Activated B cell treated with CpG ODN at 0.5 μM for 24 hours (primary cell): ENCODE measurements at regions of chr7 and their contacts with region 1.

Region 1: DNA sequence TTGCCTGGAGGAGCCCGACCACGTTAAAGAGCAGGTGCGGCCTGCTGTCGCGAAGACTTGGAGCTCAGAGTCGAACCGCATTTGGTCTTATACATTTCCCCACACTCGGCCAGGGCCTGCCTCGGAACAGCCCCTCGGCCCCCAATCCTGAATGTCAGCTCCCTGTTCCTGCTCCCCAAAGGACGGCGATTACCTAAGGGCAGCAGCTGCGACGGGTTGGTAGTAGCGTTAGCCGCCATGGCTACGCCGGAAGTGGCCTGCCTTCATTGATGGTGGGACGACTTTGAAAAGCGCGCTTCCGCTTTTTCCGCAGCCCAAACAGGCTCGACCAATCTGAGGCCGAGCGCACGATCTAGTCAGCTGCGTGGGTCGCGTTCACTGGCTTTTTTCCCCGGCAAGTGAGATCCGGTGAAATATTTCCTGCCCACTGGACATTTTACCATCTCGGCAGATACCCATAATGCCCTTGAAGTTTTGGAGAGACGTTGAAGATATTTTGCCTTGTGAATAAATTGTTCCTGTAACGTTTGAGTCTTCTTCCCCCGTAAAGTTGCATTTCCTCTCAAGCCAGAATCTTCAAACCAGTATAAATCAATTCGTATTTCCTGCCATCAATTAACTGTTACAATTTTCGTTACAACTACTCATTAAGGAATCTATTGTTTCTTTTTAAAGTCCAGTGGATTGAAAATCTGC is at the start of gene LSM5:
- DNase-seq: peak; percentile 82
- ATAC-seq: peak; percentile 60
- H3K4me3 Mint-ChIP-seq: peak within 1 kb of the TSS; percentile 95
- H3K27ac Mint-ChIP-seq: peak within 1 kb of the TSS; percentile 93
- H3K4me1 Mint-ChIP-seq: peaks cover 24% of the 10 kb centered on the region
- H3K27me3 Mint-ChIP-seq: no peaks in the 10 kb centered on the region
- CTCF ChIP-seq: no peak
- total RNA-seq, gene LSM5: 47.1 and 53.3 TPM in 2 replicates

Region 2: DNA sequence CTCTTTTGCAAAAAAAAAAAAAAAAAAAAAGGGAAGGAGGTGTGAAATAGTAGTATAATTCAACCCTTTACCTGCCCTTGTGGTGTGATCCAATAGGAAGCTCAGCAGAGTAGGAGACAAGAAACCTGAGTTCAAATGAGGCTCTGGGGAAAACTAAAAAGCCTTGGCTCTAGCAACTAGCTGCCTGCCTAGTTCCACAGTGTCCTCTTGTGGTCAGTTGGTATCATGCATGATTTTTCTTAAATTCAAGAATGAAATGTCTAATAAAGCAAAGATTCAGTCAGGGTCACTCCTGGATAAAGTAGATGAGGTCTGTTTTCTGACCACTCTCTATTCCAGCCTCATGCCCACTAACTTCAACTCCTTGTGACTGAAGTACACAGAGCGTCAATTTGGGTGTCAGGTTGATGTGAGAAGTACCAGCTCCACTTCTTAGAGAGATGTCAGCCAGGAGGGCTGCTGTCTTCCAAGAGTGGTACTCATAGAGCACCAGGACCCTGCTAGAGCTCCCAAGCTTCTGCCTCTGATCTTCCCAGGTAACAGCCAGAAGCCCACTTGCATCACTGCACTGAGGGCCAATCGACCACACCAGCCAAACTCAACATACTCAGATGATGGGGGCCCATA is 10.6 kb before region 1 on chr7:
- CTCF ChIA-PET with region 1: no interaction called
- POLR2A ChIA-PET with region 1: interaction called, 10 read pairs
- intact Hi-C with region 1: no loop called
- DNase-seq: no peak
- ATAC-seq: no peak
- H3K4me3 Mint-ChIP-seq: no peak overlapping the region
- H3K27ac Mint-ChIP-seq: no peak overlapping the region
- H3K4me1 Mint-ChIP-seq: no peaks in the 10 kb centered on the region
- H3K27me3 Mint-ChIP-seq: no peaks in the 10 kb centered on the region
- CTCF ChIP-seq: no peak

Region 3: GRCh38 chr7:33128990-33129805 is 638.9 kb after region 1 on chr7 and contains the start of gene BBS9:
- CTCF ChIA-PET with region 1: no interaction called
- POLR2A ChIA-PET with region 1: no interaction called
- intact Hi-C with region 1: loop called (anchors 1 kb)
- DNase-seq: peak; percentile 90
- ATAC-seq: peak; percentile 92
- H3K4me3 Mint-ChIP-seq: peak within 1 kb of the TSS; percentile 94
- H3K27ac Mint-ChIP-seq: peak within 1 kb of the TSS; percentile 92
- H3K4me1 Mint-ChIP-seq: peaks cover 18% of the 10 kb centered on the region
- H3K27me3 Mint-ChIP-seq: no peaks in the 10 kb centered on the region
- CTCF ChIP-seq: no peak
- total RNA-seq, gene BBS9: 18.3 and 18.6 TPM in 2 replicates